ENCODE measurements at regions of chr4 and their contacts with region 1.

Region 1: DNA sequence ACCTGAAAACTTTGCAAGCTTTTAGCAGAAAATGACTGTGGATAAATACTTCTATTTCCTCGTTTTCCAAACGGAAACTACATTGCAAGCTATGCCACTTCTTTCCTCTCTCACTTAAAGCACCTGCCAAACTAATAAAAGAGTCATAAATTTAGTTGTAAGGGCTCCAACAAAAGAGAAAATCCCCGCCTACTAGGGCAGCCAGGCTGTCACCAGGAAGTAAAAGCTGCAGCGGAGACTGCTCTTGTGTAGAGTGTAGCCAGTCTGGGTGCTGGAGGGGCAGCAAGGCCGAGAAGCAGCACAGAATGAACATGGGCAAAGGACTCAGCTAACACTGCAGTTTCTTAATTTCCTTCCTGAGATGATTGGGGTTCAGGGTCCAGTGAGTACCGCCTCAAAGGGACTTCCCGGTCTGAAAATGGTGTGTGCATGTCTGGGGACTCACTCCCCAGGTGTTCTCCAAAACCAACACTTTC is 89.3 kb upstream of the MAML3 start:
- DNase-seq: peak; percentile 63
- H3K4me3 ChIP-seq: no peak overlapping the region
- H3K27ac ChIP-seq: peak overlapping the region; percentile 54
- H3K4me1 ChIP-seq: peaks cover 32% of the 10 kb centered on the region
- H3K27me3 ChIP-seq: no peaks in the 10 kb centered on the region
- CTCF ChIP-seq: no peak

Region 2: DNA sequence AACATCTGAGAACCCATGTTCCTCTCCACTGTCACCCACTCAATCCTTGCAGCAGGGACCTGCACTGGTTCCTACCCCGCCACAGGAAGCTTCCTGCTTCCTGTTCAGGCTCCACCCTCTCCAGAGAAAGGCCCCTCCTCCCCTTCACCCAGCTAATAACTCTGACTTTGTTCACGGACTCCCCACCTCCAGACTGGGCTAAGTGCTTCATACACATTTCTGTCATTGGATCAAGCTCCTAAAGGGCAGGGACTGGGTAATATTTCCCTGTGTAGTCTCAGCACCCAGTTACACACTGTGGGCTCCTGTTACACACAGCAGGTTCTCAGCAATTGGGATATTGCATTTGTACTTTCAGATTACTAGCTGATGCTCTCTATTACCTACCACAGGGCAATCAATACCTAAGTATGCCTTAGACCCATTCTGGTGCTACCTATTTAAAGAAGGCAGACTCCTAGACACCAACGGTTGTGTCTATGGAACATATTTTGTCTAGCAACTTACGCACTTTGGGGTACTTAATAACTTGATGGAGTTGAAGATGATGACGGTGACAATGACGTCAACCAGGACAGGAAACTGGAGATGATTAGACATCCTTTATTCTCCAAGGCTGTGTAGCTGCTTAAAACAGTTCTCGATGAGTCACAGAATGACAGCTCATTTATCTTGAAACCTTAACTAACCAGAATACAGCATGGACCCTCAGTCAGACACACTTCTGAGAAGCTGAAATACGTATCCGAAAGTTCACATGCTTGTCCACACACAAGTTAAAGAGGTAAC is 147.4 kb before region 1 on chr4:
- CTCF ChIA-PET with region 1: no interaction called
- POLR2A ChIA-PET with region 1: no interaction called
- intact Hi-C with region 1: loop called (anchors 5 kb)
- DNase-seq: peak; percentile 93
- H3K4me3 ChIP-seq: peak overlapping the region; percentile 13
- H3K27ac ChIP-seq: peak overlapping the region; percentile 85
- H3K4me1 ChIP-seq: peaks cover 76% of the 10 kb centered on the region
- H3K27me3 ChIP-seq: no peaks in the 10 kb centered on the region
- CTCF ChIP-seq: no peak

Region 3: GRCh38 chr4:140673729-140674128 is 430.4 kb after region 1 on chr4:
- CTCF ChIA-PET with region 1: no interaction called
- POLR2A ChIA-PET with region 1: no interaction called
- intact Hi-C with region 1: no loop called
- DNase-seq: no peak
- H3K4me3 ChIP-seq: no peak overlapping the region
- H3K27ac ChIP-seq: no peak overlapping the region
- H3K4me1 ChIP-seq: no peaks in the 10 kb centered on the region
- H3K27me3 ChIP-seq: no peaks in the 10 kb centered on the region
- CTCF ChIP-seq: no peak